ENCODE measurements at regions of chr14 and their contacts with region 1.

Region 1: DNA sequence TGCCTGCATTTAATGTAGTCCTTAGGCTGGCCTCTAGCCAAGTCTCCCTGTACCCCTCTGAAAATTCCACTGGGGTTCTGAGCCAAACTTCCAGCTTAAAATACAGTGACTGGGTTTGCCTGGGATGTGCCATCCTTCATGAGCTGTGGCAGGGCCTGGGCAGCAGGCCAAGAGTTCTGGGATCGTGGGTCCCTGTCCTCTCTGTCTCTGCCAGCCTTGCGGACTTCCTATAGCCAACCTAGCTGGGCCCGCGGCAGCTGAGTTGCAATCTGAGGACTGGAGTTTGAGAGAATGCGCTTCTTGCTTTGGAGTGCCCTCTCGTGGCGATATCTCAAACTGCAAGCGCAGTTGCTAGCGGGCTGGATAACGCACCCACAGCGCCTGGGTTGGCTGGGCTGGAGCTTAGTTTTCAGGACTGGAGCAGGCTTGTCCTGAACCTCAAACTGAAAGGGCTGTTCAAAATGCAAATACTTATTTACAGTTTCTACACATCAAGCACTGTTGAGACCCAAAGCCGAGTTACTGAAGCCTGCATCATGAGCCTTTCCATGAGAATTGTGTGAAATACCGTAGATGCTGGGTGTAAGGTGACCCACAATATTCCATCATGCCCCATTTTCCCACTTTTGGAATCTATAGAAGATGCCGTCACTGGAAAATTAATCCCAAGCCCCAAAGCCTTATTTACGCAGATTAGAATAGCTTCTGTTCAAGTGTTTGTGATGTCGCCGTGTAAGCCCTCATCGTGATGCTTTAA is 7.3 kb upstream of the IFI27L2 start:
- DNase-seq: peak; percentile 81 to 91 (median 86)
- ATAC-seq: peak; percentile 61 to 95 (median 94)
- H3K4me3 ChIP-seq: no peak overlapping the region
- H3K27ac ChIP-seq: no peak overlapping the region
- H3K4me1 ChIP-seq: no peaks in the 10 kb centered on the region
- H3K27me3 ChIP-seq: no peaks in the 10 kb centered on the region
- CTCF ChIP-seq: peak; percentile 89 to 99 (median 96)
- POLR2A ChIP-seq: no peak

Region 2: GRCh38 chr14:93959239-93960107 is 177.3 kb before region 1 on chr14:
- intact Hi-C with region 1: loop called in 1 of 10 experiments (anchors 10 kb)
- DNase-seq: peak; percentile 56 to 78 (median 59)
- ATAC-seq: peak in 3 of 4 donors; percentile 17 to 55 (median 54)
- H3K4me3 ChIP-seq: no peak overlapping the region
- H3K27ac ChIP-seq: peak overlapping the region in 11 of 12 donors; percentile 6 to 87 (median 77)
- H3K4me1 ChIP-seq: peaks cover 3 to 95% (median 53%) of the 10 kb centered on the region in 12 donors
- H3K27me3 ChIP-seq: no peaks in the 10 kb centered on the region
- CTCF ChIP-seq: no peak
- POLR2A ChIP-seq: no peak

Region 3: DNA sequence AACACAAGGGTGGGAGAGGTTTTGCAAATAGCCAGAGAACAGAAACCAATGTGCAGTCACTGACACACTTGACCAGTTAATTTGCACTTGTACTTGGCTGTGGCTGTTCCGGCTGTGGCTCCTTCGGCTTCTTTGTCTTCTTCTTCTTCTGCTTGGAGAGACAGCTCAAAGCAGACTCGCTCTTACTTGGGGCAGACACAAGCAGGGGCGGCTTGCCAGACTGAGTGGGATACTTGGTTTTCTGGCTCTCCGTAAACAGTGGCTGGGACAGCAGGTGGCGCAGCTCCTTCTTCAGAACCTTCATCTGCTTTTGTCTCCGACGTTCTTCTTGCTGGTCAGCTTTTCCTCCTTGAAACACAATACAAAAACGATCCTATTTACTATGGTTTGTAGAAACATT is 85.6 kb before region 1 on chr14:
- intact Hi-C with region 1: loop called in 4 of 10 experiments (anchors 5 kb)
- DNase-seq: peak in 3 of 5 donors; percentile 49 to 67 (median 52)
- ATAC-seq: peak in 2 of 4 donors; percentile 24 to 41
- H3K4me3 ChIP-seq: no peak overlapping the region
- H3K27ac ChIP-seq: peak overlapping the region in 5 of 12 donors; percentile 10 to 57 (median 41)
- H3K4me1 ChIP-seq: peaks cover 0 to 37% (median 17%) of the 10 kb centered on the region in 12 donors
- H3K27me3 ChIP-seq: no peaks in the 10 kb centered on the region
- CTCF ChIP-seq: peak in 9 of 12 donors; percentile 9 to 55 (median 39)
- POLR2A ChIP-seq: no peak

Region 4: DNA sequence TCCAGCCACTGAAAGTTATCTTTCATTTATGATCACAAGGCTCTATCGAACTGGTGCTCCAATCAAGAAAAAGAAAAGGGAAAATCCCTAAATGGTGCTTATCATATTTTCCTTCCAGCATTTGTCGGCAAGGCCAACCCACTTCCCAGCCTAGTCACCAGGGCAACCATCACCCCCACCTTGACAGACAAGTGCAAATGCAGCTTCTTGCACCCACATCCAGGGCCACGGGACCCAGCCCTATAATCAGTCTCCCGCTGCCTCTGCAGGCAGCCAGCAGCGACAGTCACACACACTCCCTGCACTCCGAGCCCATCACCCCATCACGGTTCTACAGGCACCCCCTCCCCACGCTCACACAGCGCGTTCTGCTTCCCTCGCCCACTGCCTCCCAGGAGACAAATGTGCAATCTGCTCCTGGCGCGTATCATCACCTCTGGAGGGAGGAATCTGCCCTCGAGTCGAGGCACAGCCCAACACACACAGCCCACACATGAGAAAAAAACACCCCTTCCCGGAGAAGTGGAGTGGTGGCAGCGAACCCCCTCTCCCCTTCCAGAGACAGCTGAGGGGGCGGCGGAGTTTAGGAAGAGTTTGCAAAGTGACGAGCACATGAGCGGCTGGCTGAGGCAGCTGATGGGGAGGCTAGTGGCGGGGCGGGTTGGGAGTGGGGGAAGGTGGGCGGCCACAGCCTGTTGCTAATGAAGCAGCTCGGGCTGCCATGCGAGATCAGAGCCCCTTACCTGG is 28.1 kb after region 1 on chr14:
- intact Hi-C with region 1: no loop called
- DNase-seq: no peak
- ATAC-seq: no peak
- H3K4me3 ChIP-seq: no peak overlapping the region
- H3K27ac ChIP-seq: no peak overlapping the region
- H3K4me1 ChIP-seq: peaks cover 0 to 13% (median 4%) of the 10 kb centered on the region in 12 donors
- H3K27me3 ChIP-seq: peaks cover 0 to 13% (median 9%) of the 10 kb centered on the region in 9 donors
- CTCF ChIP-seq: no peak
- POLR2A ChIP-seq: no peak

Region 5: DNA sequence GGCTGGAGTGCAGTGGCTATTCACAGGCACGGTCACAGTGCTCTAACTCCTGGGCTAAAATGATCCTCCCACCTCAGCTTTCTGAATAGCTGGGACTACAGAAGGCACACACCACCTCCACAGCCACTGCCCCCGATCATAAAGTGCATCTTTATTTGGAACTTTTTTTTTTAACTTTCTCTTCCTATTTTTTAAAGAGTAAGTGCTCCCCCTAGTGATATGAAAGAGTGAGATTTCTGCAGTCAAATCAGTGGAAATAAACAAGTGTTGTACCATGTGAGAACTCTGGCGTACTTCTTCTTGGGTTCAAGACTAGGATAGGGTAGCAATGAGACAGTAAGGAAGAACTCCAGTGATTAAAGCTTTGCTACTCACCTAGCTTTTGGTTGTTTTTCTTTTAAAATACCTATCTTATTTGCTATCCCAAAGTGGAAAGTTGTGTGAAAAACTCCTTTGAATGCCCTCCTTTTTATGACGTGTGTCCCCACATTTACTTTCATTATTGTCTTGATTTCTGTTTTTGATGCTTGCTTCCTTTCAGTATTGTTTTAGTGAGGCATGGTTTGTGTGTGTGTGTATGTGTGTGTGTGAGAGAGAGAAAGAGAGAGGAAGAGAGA is 44.0 kb after region 1 on chr14:
- intact Hi-C with region 1: loop called in 7 of 10 experiments (anchors 5 kb)
- DNase-seq: no peak
- ATAC-seq: peak; percentile 20 to 59 (median 46)
- H3K4me3 ChIP-seq: peak overlapping the region in 1 of 12 donors; percentile 18
- H3K27ac ChIP-seq: no peak overlapping the region
- H3K4me1 ChIP-seq: peaks cover 0 to 3% (median 0%) of the 10 kb centered on the region in 12 donors
- H3K27me3 ChIP-seq: peaks cover 0 to 55% (median 10%) of the 10 kb centered on the region in 9 donors
- CTCF ChIP-seq: peak; percentile 17 to 67 (median 59)
- POLR2A ChIP-seq: no peak